ENCODE measurements at regions of chr12 and their contacts with region 1.

Region 1: DNA sequence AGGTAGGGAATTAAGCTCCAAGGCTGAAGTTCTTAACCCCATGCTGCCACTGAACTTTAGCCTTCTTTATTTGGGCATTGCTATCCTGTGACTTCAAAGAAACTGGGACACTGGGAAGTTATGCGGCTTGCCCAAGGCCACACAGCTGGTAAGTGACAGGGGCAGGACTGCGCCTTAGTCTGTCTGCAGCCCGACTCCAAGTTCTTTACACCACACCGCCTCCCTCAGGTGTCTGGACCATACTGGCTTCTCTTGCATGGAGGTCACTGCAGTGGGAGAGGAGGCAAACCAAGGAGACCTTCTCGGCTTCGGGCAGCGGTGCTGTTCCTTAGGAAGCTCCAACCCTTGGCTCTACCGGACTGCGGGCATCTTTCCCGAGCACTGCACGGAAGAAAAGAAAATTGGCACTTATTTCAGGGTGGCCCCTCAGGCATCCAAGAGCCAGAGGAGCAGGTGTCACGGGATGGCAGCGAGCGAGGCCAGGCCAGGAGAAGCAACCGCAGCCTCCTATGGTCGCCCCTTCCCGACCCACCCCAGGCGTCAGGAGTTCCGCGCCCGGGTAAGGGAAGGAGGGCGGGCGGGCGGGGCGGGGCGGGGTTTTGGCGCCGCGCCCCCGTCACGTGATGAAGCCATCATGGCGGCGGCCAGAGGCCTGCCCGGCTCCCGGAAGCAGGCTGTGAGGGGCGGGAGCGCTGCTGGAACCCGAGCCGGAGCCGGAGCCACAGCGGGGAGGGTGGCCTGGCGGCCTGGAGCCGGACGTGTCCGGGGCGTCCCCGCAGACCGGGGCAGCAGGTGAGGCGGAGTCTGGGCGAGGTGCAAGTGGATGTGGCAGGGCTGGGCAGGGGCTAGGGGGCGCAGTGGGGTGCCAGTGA is 16.4 kb upstream of the ESPL1 start:
- DNase-seq: peak; percentile 91

Region 2: GRCh38 chr12:53213348-53213747 is 38.4 kb before region 1 on chr12:
- CTCF ChIA-PET with region 1: interaction called, 20 read pairs
- POLR2A ChIA-PET with region 1: interaction called, 12 read pairs
- DNase-seq: peak; percentile 88